A673 (cell line): ENCODE measurements at regions of chr3 and their contacts with region 1.

Region 1: GRCh38 chr3:175007306-175007705 is 148.2 kb downstream of the NAALADL2 start:
- DNase-seq: no peak
- H3K4me3 ChIP-seq: no peak overlapping the region
- H3K27ac ChIP-seq: no peak overlapping the region
- H3K4me1 ChIP-seq: no peaks in the 10 kb centered on the region
- H3K27me3 ChIP-seq: no peaks in the 10 kb centered on the region
- CTCF ChIP-seq: no peak

Region 2: GRCh38 chr3:174775587-174775986 is 231.7 kb before region 1 on chr3:
- CTCF ChIA-PET with region 1: no interaction called
- POLR2A ChIA-PET with region 1: no interaction called
- intact Hi-C with region 1: no loop called
- DNase-seq: no peak
- H3K4me3 ChIP-seq: no peak overlapping the region
- H3K27ac ChIP-seq: no peak overlapping the region
- H3K4me1 ChIP-seq: no peaks in the 10 kb centered on the region
- H3K27me3 ChIP-seq: no peaks in the 10 kb centered on the region
- CTCF ChIP-seq: no peak

Region 3: GRCh38 chr3:175029828-175030227 is 22.5 kb after region 1 on chr3:
- CTCF ChIA-PET with region 1: no interaction called
- POLR2A ChIA-PET with region 1: no interaction called
- intact Hi-C with region 1: no loop called
- DNase-seq: no peak
- H3K4me3 ChIP-seq: no peak overlapping the region
- H3K27ac ChIP-seq: no peak overlapping the region
- H3K4me1 ChIP-seq: no peaks in the 10 kb centered on the region
- H3K27me3 ChIP-seq: no peaks in the 10 kb centered on the region
- CTCF ChIP-seq: no peak

Region 4: GRCh38 chr3:175672119-175672689 is 664.9 kb after region 1 on chr3:
- CTCF ChIA-PET with region 1: no interaction called
- POLR2A ChIA-PET with region 1: interaction called, 20 read pairs
- intact Hi-C with region 1: no loop called
- DNase-seq: no peak
- H3K4me3 ChIP-seq: no peak overlapping the region
- H3K27ac ChIP-seq: no peak overlapping the region
- H3K4me1 ChIP-seq: no peaks in the 10 kb centered on the region
- H3K27me3 ChIP-seq: no peaks in the 10 kb centered on the region
- CTCF ChIP-seq: no peak